ENCODE measurements at regions of chr2 and their contacts with region 1.

Region 1: DNA sequence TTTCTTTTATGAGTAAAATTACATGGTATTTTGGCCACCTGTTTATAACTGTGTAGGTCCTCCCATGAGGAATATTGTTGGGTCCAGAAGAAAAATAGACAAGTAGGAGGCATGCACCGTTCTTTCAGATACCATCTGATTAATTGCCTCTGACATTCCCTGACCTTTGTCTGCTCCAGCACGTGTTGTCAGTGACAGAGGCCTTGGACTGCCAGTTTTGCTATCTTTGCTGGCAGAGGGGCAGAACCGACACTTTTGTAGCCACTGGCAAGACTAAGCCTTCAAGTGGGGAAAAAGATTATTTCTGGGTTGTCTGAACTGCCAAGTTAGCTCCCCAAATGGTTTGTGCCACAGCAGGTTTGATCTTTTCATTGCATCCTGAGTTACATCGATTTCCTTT is 276.9 kb downstream of the CAMKMT start:
- DNase-seq: no peak
- ATAC-seq: no peak
- H3K4me3 ChIP-seq: no peak overlapping the region
- H3K27ac ChIP-seq: no peak overlapping the region
- H3K4me1 ChIP-seq: no peaks in the 10 kb centered on the region
- H3K27me3 ChIP-seq: no peaks in the 10 kb centered on the region
- CTCF ChIP-seq: no peak
- EP300 ChIP-seq: no peak
- POLR2A ChIP-seq: no peak
- RAD21 ChIP-seq: no peak

Region 2: GRCh38 chr2:44450806-44451205 is 187.8 kb before region 1 on chr2:
- CTCF ChIA-PET with region 1: no interaction called
- POLR2A ChIA-PET with region 1: no interaction called
- RAD21 ChIA-PET with region 1: no interaction called
- SMC1A ChIA-PET with region 1: no interaction called
- in situ Hi-C with region 1: no loop called
- intact Hi-C with region 1: no loop called
- DNase-seq: no peak
- ATAC-seq: no peak
- H3K4me3 ChIP-seq: no peak overlapping the region
- H3K27ac ChIP-seq: no peak overlapping the region
- H3K4me1 ChIP-seq: no peaks in the 10 kb centered on the region
- H3K27me3 ChIP-seq: no peaks in the 10 kb centered on the region
- CTCF ChIP-seq: no peak
- EP300 ChIP-seq: no peak
- POLR2A ChIP-seq: no peak
- RAD21 ChIP-seq: no peak

Region 3: GRCh38 chr2:44596537-44597320 is 41.9 kb before region 1 on chr2:
- CTCF ChIA-PET with region 1: interaction called, 4 read pairs
- POLR2A ChIA-PET with region 1: no interaction called
- RAD21 ChIA-PET with region 1: interaction called, 4 read pairs
- SMC1A ChIA-PET with region 1: interaction called, 11 read pairs
- in situ Hi-C with region 1: no loop called
- intact Hi-C with region 1: no loop called
- DNase-seq: peak; percentile 53
- ATAC-seq: peak; percentile 93
- H3K4me3 ChIP-seq: no peak overlapping the region
- H3K27ac ChIP-seq: no peak overlapping the region
- H3K4me1 ChIP-seq: peaks cover 3% of the 10 kb centered on the region; the same call in 1 of the 2 replicates
- H3K27me3 ChIP-seq: no peaks in the 10 kb centered on the region
- CTCF ChIP-seq: no peak
- EP300 ChIP-seq: peak; percentile 68 to 79; a peak in 2 of 4 replicates
- POLR2A ChIP-seq: no peak
- RAD21 ChIP-seq: no peak

Region 4: DNA sequence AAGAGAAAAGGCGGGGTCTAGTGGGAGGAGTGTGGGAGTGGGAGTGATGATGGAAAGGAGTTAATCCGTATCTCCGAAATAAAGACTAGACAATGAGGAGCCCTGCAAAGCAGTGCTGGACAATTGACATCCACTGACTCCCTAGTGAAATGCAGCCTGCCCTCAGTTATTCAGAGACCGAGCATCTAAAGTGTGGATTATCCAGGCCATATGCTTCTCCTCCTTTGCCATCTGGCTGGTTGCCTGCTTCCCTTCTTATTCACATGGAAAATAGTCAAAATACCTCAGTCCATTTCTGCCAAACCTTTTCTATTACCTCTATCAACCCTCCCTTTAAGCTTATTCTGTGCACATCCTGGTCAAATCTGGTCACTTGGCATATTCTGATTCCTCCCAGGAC is 14.1 kb after region 1 on chr2:
- CTCF ChIA-PET with region 1: interaction called, 6 read pairs
- POLR2A ChIA-PET with region 1: interaction called, 3 read pairs
- RAD21 ChIA-PET with region 1: interaction called, 3 read pairs
- SMC1A ChIA-PET with region 1: interaction called, 12 read pairs
- in situ Hi-C with region 1: no loop called
- intact Hi-C with region 1: no loop called
- DNase-seq: no peak
- ATAC-seq: no peak
- H3K4me3 ChIP-seq: no peak overlapping the region
- H3K27ac ChIP-seq: no peak overlapping the region
- H3K4me1 ChIP-seq: peaks cover 9% of the 10 kb centered on the region
- H3K27me3 ChIP-seq: no peaks in the 10 kb centered on the region
- CTCF ChIP-seq: no peak
- EP300 ChIP-seq: no peak
- POLR2A ChIP-seq: no peak
- RAD21 ChIP-seq: no peak

Measured in GM12878 (cell line).